ENCODE measurements at regions of chr15 and their contacts with region 1.

Region 1: GRCh38 chr15:65275728-65276126 is 11.0 kb downstream of the PARP16 start:
- DNase-seq: no peak
- H3K4me3 ChIP-seq: no peak overlapping the region
- H3K27ac ChIP-seq: no peak overlapping the region
- H3K4me1 ChIP-seq: peaks cover 0 to 7% (median 2%) of the 10 kb centered on the region in 3 donors
- H3K27me3 ChIP-seq: no peaks in the 10 kb centered on the region
- CTCF ChIP-seq: no peak

Region 2: DNA sequence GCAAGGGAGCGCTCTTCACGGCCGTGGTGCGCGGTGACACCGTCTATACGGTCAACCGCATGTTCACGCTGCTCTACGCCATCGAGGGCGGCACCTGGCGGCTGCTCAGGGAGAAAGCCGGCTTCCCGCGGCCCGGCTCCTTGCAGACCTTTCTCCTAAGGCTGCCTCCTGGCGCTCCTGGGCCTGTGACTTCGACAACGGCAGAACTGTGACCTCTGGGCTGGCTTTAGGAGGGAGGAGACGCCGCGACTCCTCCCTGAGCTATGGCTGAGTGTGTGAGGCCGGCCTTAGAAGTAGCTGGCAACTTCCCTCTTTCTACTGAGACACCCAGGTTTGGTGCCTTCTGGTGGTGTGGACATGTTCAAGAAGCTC is 197.8 kb before region 1 on chr15:
- intact Hi-C with region 1: no loop called
- DNase-seq: peak; percentile 78 to 85 (median 82)
- H3K4me3 ChIP-seq: no peak overlapping the region
- H3K27ac ChIP-seq: no peak overlapping the region
- H3K4me1 ChIP-seq: peaks cover 0 to 7% (median 0%) of the 10 kb centered on the region in 3 donors
- H3K27me3 ChIP-seq: no peaks in the 10 kb centered on the region
- CTCF ChIP-seq: peak; percentile 72

Region 3: GRCh38 chr15:65192016-65192415 is 83.7 kb before region 1 on chr15:
- intact Hi-C with region 1: loop called (anchors 10 kb)
- DNase-seq: no peak
- H3K4me3 ChIP-seq: no peak overlapping the region
- H3K27ac ChIP-seq: no peak overlapping the region
- H3K4me1 ChIP-seq: no peaks in the 10 kb centered on the region
- H3K27me3 ChIP-seq: no peaks in the 10 kb centered on the region
- CTCF ChIP-seq: no peak

Region 4: GRCh38 chr15:65638681-65639089 is 363.0 kb after region 1 on chr15:
- intact Hi-C with region 1: no loop called
- DNase-seq: peak in 3 of 5 donors; percentile 51 to 94 (median 85)
- H3K4me3 ChIP-seq: peak overlapping the region in 1 of 3 donors; percentile 42
- H3K27ac ChIP-seq: no peak overlapping the region
- H3K4me1 ChIP-seq: peaks cover 0 to 4% (median 0%) of the 10 kb centered on the region in 3 donors
- H3K27me3 ChIP-seq: no peaks in the 10 kb centered on the region
- CTCF ChIP-seq: peak; percentile 72